ENCODE measurements at regions of chr11 and their contacts with region 1.

Region 1: DNA sequence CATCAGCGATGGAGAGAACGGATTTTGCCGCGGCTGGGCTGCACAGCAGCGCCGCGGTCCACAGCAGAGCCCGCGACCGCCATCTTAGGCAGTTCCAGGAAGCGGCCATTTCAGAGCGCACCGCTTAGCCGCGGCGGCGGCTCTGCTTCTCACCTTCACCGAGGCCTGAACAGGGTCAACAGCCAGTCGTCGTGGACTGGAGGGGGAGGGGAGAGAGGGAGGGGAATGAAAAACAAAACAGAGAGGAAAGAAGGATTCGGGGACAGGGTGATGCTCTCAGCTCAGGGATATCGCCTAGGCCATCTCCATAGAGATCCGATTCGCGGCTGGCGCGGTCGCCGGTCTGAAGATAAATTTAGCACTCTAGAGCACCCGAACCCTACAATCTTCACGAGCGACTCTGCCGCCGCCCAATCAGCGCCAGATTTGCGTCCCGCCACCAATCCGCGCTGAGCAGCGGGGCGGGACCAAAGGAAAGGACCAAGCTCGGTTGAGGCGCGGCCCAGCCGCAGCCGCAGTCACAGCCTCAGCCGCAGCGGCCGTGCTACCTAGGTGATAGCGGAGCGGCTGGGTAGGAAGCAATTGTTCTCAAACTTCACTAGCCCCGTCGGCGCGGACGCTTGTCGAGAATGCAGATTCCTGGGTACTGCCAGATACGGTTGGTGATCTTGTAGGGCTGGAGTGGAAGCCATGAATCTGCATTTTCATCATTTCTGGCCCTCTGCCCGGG is at the start of gene ZBED5:
- DNase-seq: peak; percentile 95 to 98
- H3K4me3 ChIP-seq: peak within 1 kb of the TSS; percentile 88 to 92
- H3K27ac ChIP-seq: peak within 1 kb of the TSS; percentile 97 to 99
- H3K4me1 ChIP-seq: peaks cover 6 to 21% of the 10 kb centered on the region in 2 donors
- H3K27me3 ChIP-seq: no peaks in the 10 kb centered on the region
- CTCF ChIP-seq: peak in 2 of 3 experiments; percentile 18 to 38
- total RNA-seq, gene ZBED5: 7.8 TPM

Region 2: DNA sequence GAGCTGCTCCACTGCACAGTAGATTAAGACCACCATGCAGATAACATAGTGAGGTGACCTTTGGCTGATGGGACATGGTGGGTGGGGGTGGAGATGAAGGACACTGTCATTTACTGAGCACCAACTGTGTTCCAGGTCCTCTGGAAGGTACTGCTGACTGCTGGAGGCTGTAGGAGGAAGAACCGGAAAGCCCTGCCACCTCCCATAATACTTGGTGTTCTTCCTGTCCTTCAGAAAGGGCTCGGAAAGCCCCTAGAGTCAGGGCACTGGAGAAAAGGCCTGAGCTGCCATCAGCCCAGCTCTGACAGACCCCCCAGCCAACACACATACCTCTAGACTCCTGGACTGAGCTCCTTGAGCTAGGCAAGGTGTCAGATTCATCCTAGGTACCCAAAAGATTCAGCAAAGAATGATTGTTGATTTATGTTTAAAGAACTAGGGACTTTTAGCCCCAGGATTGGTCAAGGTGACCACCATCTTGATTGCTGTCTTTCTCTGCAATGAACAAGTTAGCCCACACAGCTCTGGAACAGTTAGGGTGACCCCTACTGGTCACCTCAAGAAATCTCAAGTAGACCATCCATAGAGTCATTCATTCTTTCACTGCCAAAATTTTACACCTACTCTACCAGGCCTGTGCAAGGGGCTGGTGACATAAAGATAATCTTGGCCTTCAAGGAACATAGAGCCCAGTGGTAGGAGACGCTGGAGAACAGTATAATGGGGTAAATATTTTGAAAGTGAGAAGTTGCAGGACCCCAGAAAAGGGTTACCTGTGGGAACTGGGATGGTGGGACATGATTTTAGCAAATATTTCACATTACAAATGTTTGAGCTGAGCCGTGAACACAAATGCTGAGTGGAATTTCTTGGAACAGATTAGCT is 203.7 kb before region 1 on chr11:
- intact Hi-C with region 1: no loop called
- DNase-seq: no peak
- H3K4me3 ChIP-seq: no peak overlapping the region
- H3K27ac ChIP-seq: peak overlapping the region; percentile 88 to 93
- H3K4me1 ChIP-seq: peaks cover 37 to 86% of the 10 kb centered on the region in 2 donors
- H3K27me3 ChIP-seq: no peaks in the 10 kb centered on the region
- CTCF ChIP-seq: peak; percentile 47 to 59 (median 55)

Region 3: DNA sequence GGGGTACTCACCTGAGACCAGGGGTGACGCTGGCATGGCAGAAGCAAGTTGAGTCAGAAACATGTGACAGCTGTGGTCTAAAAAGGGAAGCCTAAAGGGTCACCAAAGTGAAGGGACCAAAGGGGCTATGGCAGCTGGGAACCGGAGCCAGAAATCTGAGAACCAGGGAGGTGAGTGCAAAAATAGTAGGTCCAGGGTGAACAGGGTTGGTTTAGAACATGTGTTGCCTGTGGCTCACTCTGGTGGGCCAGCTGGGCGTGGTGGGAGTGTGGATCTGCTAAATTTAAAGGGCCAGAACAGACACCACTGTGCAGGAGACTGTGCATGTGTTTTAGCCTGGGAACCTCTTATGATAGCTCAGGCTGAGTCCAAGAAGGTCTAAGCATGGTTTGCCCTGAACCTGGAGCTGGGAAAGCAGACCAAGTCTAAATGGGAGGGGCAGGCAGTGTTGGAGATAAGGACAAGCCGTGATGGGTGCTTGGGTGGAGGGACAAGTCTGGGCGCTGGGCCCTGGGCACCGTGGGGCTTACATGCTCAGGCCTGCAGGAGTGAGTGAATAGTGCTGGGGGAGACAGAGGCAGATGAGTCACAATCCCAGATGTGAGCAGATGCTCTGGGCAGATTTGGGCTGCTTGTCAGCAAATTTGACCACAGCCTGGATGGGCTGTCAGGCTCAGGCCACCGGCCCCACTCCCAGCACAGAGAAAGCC is 41.4 kb after region 1 on chr11:
- intact Hi-C with region 1: loop called (anchors 2 kb)
- DNase-seq: peak; percentile 45 to 79
- H3K4me3 ChIP-seq: no peak overlapping the region
- H3K27ac ChIP-seq: peak overlapping the region; percentile 89 to 93
- H3K4me1 ChIP-seq: peaks cover 17 to 27% of the 10 kb centered on the region in 2 donors
- H3K27me3 ChIP-seq: no peaks in the 10 kb centered on the region
- CTCF ChIP-seq: no peak

Measured in ascending aorta (tissue), 2 donors.